ENCODE measurements at regions of chr14 and their contacts with region 1.

Region 1: GRCh38 chr14:61761959-61762786 is at the start of gene SNAPC1:
- DNase-seq: peak; percentile 93
- ATAC-seq: peak; percentile 99
- H3K4me3 ChIP-seq: peak within 1 kb of the TSS; percentile 91 to 95
- H3K27ac ChIP-seq: peak within 1 kb of the TSS; percentile 53
- H3K4me1 ChIP-seq: peaks cover 5 to 16% of the 10 kb centered on the region in 2 experiments; a peak in 3 of 4 replicates
- H3K27me3 ChIP-seq: no peaks in the 10 kb centered on the region
- CTCF ChIP-seq: no peak
- POLR2A ChIP-seq: peak; percentile 78
- RAD21 ChIP-seq: no peak
- total RNA-seq, gene SNAPC1: 8.2 TPM

Region 2: DNA sequence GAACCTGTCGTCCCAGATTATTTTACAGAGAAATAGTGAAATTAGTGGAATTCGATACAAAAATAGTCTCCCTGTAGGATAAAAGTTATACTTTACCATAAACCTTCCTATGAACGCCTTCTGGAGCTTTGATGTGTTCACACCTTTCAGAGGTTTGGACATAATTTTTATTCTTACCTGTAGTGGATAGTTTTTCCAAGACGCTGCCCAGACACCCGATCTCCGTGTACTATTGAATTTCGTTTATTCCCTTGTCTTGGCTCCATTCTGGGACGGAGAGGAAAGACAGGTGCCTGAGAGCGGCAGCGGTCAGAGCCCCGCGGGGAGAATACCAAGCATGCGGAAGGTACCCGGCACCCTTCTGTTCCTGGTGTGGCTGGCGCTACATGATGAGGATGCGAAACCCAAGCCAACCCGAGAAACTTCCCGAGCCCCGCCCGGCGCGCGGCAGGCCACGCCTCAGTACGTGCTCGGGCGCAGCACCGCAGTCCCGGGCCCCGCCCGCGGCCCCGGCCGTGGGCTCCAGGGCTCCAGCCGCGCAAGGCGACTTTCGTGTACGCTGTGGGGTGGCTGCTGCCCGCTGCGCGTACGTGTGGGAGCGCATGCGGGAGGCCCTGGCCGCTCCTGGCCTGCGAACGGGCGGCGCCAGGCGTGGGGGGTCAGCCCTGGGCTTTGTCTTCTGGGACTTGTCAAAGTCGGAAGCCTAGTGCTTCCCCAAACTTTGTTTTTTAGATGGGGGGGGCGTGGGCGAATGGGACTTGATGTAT is 11.3 kb before region 1 on chr14:
- CTCF ChIA-PET with region 1: interaction called, 3 read pairs
- POLR2A ChIA-PET with region 1: interaction called, 12 read pairs
- RAD21 ChIA-PET with region 1: interaction called in 1 of 2 experiments, 3 read pairs
- intact Hi-C with region 1: no loop called
- DNase-seq: peak; percentile 70
- ATAC-seq: peak; percentile 96
- H3K4me3 ChIP-seq: peak overlapping the region; percentile 62
- H3K27ac ChIP-seq: peak overlapping the region; percentile 59; the same call in 1 of the 2 replicates
- H3K4me1 ChIP-seq: peaks cover 8 to 38% of the 10 kb centered on the region in 2 experiments; a peak in 3 of 4 replicates
- H3K27me3 ChIP-seq: no peaks in the 10 kb centered on the region
- CTCF ChIP-seq: no peak
- POLR2A ChIP-seq: peak; percentile 74
- RAD21 ChIP-seq: no peak

Measured in HCT116 (cell line).